PC-9 (cell line): ENCODE measurements at regions of chrX and their contacts with region 1.

Region 1: GRCh38 chrX:10254741-10255140 is 98.0 kb downstream of the CLCN4 start:
- DNase-seq: peak; percentile 20 to 57
- H3K4me3 ChIP-seq: no peak overlapping the region
- H3K27ac ChIP-seq: no peak overlapping the region
- H3K4me1 ChIP-seq: no peaks in the 10 kb centered on the region
- H3K27me3 ChIP-seq: no peaks in the 10 kb centered on the region
- CTCF ChIP-seq: peak; percentile 56

Region 2: GRCh38 chrX:10280071-10280470 is 25.3 kb after region 1 on chrX:
- CTCF ChIA-PET with region 1: no interaction called
- POLR2A ChIA-PET with region 1: interaction called, 12 read pairs
- intact Hi-C with region 1: no loop called
- DNase-seq: no peak
- H3K4me3 ChIP-seq: no peak overlapping the region
- H3K27ac ChIP-seq: no peak overlapping the region
- H3K4me1 ChIP-seq: no peaks in the 10 kb centered on the region
- H3K27me3 ChIP-seq: no peaks in the 10 kb centered on the region
- CTCF ChIP-seq: no peak

Region 3: GRCh38 chrX:10447577-10448214 is 193.0 kb after region 1 on chrX:
- CTCF ChIA-PET with region 1: interaction called, 5 read pairs
- POLR2A ChIA-PET with region 1: no interaction called
- intact Hi-C with region 1: loop called (anchors 10 kb)
- DNase-seq: peak; percentile 44 to 78
- H3K4me3 ChIP-seq: no peak overlapping the region
- H3K27ac ChIP-seq: no peak overlapping the region
- H3K4me1 ChIP-seq: peaks cover 9% of the 10 kb centered on the region; the same call in 1 of the 2 replicates
- H3K27me3 ChIP-seq: no peaks in the 10 kb centered on the region
- CTCF ChIP-seq: no peak